Heart left ventricle (tissue), 16 donors: ENCODE measurements at regions of chr3 and their contacts with region 1.

Region 1: GRCh38 chr3:72818092-72818773 is 30.0 kb downstream of the SHQ1 start:
- DNase-seq: no peak
- ATAC-seq: no peak
- H3K4me3 ChIP-seq: no peak overlapping the region
- H3K27ac ChIP-seq: no peak overlapping the region
- H3K4me1 ChIP-seq: peaks cover 4 to 38% (median 33%) of the 10 kb centered on the region in 12 donors
- H3K27me3 ChIP-seq: no peaks in the 10 kb centered on the region
- CTCF ChIP-seq: peak; percentile 19 to 67 (median 53)
- POLR2A ChIP-seq: no peak

Region 2: GRCh38 chr3:71718072-71718471 is 1100.2 kb before region 1 on chr3:
- intact Hi-C with region 1: loop called in 6 of 10 experiments (anchors 5 to 10 kb)
- DNase-seq: no peak
- ATAC-seq: no peak
- H3K4me3 ChIP-seq: no peak overlapping the region
- H3K27ac ChIP-seq: no peak overlapping the region
- H3K4me1 ChIP-seq: peaks cover 0 to 66% (median 0%) of the 10 kb centered on the region in 12 donors
- H3K27me3 ChIP-seq: no peaks in the 10 kb centered on the region
- CTCF ChIP-seq: no peak
- POLR2A ChIP-seq: no peak

Region 3: DNA sequence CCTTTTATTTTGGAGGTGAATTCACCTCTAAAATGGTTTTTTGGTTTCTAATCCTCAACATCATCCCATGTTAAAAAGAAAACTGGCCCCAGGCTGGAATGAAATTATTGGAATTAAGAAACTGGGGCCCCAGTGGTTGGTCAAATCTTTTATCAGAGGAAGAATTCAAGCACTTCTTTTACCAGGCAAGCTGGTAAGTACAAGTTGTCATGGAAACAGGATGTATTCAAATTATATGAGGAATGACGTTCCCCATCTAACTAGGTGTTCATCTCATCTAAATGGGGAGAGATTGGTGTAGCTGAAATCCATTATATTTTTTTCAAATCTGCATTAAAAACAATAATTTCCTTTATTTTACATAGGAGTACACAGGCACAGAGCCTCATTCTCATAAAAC is 1083.3 kb before region 1 on chr3:
- intact Hi-C with region 1: loop called in 3 of 10 experiments (anchors 5 to 10 kb)
- DNase-seq: no peak
- ATAC-seq: no peak
- H3K4me3 ChIP-seq: no peak overlapping the region
- H3K27ac ChIP-seq: no peak overlapping the region
- H3K4me1 ChIP-seq: peaks cover 0 to 4% (median 0%) of the 10 kb centered on the region in 12 donors
- H3K27me3 ChIP-seq: peaks cover 0 to 5% (median 0%) of the 10 kb centered on the region in 9 donors
- CTCF ChIP-seq: no peak
- POLR2A ChIP-seq: no peak

Region 4: GRCh38 chr3:71955240-71956068 is 862.8 kb before region 1 on chr3:
- intact Hi-C with region 1: loop called in 9 of 10 experiments (anchors 2 to 5 kb)
- DNase-seq: peak; percentile 62 to 75 (median 72)
- ATAC-seq: peak in 3 of 4 donors; percentile 62 to 76 (median 76)
- H3K4me3 ChIP-seq: no peak overlapping the region
- H3K27ac ChIP-seq: no peak overlapping the region
- H3K4me1 ChIP-seq: peaks cover 0 to 10% (median 5%) of the 10 kb centered on the region in 12 donors
- H3K27me3 ChIP-seq: peaks cover 0 to 8% (median 0%) of the 10 kb centered on the region in 9 donors
- CTCF ChIP-seq: peak; percentile 49 to 84 (median 74)
- POLR2A ChIP-seq: no peak

Region 5: GRCh38 chr3:72447059-72447946 is 370.9 kb before region 1 on chr3:
- intact Hi-C with region 1: loop called in 2 of 10 experiments (anchors 10 kb)
- DNase-seq: peak; percentile 94 to 97 (median 95)
- ATAC-seq: peak; percentile 88 to 99 (median 98)
- H3K4me3 ChIP-seq: peak overlapping the region; percentile 48 to 97 (median 82)
- H3K27ac ChIP-seq: peak overlapping the region; percentile 66 to 92 (median 88)
- H3K4me1 ChIP-seq: peaks cover 0 to 39% (median 25%) of the 10 kb centered on the region in 12 donors
- H3K27me3 ChIP-seq: no peaks in the 10 kb centered on the region
- CTCF ChIP-seq: peak in 2 of 12 donors; percentile 5 to 8
- POLR2A ChIP-seq: no peak

Region 6: DNA sequence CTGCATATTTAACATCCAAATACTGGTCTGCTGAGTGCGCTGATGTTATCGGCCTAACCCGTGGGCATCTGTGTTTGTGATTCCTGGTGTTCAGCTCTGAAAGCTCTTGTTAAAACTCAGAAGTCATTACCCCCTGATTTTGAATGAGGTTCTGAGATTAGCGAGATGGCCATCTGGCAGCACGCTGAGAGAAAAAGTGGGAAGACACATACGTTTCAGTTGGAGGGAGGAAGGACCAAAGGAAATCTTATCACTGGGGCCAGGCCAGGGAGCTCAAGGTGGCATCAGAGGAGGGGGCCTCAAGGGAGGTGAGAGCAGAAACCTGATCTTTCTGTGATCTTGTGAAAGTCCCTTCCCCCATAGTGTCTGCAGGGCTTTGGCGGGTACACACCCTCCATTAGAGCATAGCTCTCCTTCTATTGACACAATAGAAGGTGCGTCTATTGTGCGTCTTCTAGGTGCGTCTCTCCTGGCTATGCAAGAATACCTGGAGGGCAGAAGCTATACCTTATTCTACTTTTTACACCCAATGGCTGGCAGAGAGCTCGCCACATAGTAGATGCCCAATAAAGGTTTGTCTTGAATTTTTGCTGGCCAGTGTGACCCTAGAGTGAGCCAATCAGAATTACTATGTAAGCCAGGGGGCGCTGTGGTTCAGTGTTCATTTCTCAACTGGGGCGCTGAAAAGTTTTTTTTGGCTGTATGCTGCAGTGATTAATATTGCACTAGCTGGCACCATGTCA is 152.4 kb before region 1 on chr3:
- intact Hi-C with region 1: loop called (anchors 2 to 10 kb)
- DNase-seq: peak in 1 of 5 donors; percentile 26
- ATAC-seq: peak in 3 of 4 donors; percentile 14 to 48 (median 43)
- H3K4me3 ChIP-seq: no peak overlapping the region
- H3K27ac ChIP-seq: no peak overlapping the region
- H3K4me1 ChIP-seq: peaks cover 0 to 6% (median under 1%) of the 10 kb centered on the region in 12 donors
- H3K27me3 ChIP-seq: no peaks in the 10 kb centered on the region
- CTCF ChIP-seq: peak; percentile 32 to 57 (median 47)
- POLR2A ChIP-seq: no peak

Region 7: DNA sequence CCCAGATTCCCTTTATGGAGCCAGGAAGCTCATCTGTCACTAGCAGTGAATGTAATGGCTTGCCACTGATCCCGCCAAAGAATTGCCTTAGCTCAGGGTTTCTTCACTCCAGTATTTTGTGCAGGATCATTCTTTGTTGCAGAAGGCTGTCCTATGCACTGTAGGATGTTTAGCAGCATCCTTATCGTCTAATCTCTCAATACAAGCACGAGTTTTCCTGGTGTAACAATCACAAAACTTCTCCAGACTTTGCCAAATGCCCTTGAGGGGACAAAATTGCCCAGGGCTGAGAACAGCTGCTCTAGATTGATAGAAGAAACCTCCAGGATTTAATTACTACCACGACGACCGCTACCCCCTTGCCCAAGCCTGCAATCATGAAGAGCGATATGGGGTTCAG is 36.8 kb after region 1 on chr3:
- intact Hi-C with region 1: no loop called
- DNase-seq: no peak
- ATAC-seq: no peak
- H3K4me3 ChIP-seq: no peak overlapping the region
- H3K27ac ChIP-seq: no peak overlapping the region
- H3K4me1 ChIP-seq: peaks cover 0 to 3% (median 0%) of the 10 kb centered on the region in 12 donors
- H3K27me3 ChIP-seq: no peaks in the 10 kb centered on the region
- CTCF ChIP-seq: no peak
- POLR2A ChIP-seq: no peak

Region 8: DNA sequence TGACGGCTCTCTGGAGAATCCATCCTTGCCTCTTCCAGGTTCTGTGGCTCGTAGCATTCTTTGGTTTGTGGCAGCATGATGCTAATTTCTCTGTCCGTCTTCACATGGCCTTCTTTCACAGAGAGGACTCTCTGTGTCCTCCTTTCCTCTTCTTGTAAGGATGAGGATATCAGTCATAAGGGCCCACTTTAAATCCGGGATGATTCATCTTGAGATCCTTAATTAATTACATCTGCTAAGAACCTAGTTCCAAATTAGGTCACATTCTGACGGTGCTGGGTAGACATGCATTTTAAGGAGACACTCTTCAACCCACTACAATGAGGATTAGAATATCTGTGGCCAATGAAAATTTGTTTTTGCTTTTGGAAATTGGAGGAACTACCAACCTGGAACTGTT is 54.0 kb after region 1 on chr3:
- intact Hi-C with region 1: no loop called
- DNase-seq: no peak
- ATAC-seq: peak in 2 of 4 donors; percentile 62 to 89
- H3K4me3 ChIP-seq: no peak overlapping the region
- H3K27ac ChIP-seq: peak overlapping the region in 1 of 12 donors; percentile 18
- H3K4me1 ChIP-seq: no peaks in the 10 kb centered on the region
- H3K27me3 ChIP-seq: peaks cover 0 to 4% (median 0%) of the 10 kb centered on the region in 9 donors
- CTCF ChIP-seq: no peak
- POLR2A ChIP-seq: no peak

Region 9: DNA sequence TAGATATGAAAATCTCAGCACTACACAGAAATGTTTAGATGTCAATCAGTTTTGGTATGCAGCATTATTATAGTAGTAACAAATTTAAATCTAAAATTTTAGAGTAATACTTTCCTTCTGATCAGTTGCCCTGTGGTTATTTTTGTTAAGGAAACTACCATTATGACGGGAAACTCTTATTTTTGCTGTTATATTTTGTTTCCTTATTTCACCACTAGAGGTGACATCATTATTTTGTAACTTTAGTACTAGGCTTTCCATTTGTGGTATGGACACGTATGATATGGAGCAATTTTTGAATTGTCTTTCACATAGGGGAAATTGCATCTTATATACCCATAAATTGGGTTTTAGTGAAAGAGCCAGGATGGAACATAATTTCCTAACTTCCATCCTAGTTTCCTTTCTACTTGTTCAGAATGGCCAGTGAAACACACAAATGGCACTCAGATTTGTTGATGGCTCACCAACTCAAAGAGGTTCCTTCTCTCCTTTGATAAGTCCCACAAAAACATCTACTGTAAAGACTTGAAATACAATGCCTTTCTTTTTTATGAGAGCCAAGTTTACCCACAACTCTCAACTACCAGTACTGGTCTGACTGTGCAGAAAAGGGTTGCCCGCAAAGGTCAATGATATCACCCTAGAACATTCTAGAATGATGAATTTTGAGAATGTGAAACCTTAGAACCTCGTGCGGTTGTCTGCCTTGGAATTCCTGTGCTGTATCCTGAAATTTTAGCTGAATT is 159.0 kb after region 1 on chr3:
- intact Hi-C with region 1: no loop called
- DNase-seq: no peak
- ATAC-seq: no peak
- H3K4me3 ChIP-seq: no peak overlapping the region
- H3K27ac ChIP-seq: no peak overlapping the region
- H3K4me1 ChIP-seq: peaks cover 0 to 11% (median 0%) of the 10 kb centered on the region in 12 donors
- H3K27me3 ChIP-seq: no peaks in the 10 kb centered on the region
- CTCF ChIP-seq: peak in 3 of 12 donors; percentile 4 to 29 (median 12)
- POLR2A ChIP-seq: no peak